ENCODE measurements at regions of chr6 and their contacts with region 1.

Region 1: GRCh38 chr6:159042003-159042825 is 2.6 kb downstream of the TAGAP start:
- DNase-seq: peak; percentile 86
- H3K4me3 Mint-ChIP-seq: peak overlapping the region; percentile 94
- H3K27ac Mint-ChIP-seq: peak overlapping the region; percentile 95
- H3K4me1 Mint-ChIP-seq: peaks cover 69% of the 10 kb centered on the region
- H3K27me3 Mint-ChIP-seq: no peaks in the 10 kb centered on the region

Region 2: DNA sequence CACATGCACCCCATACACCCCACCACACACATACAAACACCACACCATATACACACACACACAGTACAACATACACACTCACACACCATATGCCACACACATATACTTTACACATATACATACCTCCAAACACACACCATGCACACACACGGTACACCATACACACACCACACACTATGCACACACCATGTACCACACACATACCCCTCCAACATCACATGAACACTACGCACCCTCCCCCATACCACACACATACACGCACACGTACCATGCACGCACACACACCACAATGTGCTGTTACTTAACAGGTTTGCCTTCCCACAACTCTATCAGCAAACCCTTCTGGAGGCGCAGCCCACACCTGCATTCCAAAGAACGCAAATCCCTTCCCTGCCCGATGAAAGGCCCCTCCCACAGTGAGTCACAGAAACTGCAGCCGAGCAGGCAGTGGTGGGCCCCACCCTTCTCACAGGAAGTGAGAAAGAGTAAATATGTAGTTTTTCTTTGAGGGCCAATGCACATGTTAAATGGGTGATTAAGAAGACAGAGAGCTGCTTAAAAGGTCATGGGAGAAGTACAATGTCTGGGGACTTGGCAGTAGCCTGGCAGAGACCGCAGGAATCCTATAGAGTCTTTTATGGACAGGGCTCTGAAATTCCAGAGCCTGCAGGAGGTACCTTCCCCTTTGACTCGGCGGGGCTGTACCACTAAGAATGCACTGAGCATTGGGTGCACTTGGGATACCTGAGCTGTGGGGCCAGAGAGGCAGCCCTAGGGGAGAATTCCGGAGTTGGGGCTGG is 188.9 kb before region 1 on chr6:
- CTCF ChIA-PET with region 1: interaction called, 3 read pairs
- POLR2A ChIA-PET with region 1: no interaction called
- intact Hi-C with region 1: loop called (anchors 2 kb)
- DNase-seq: peak; percentile 94
- H3K4me3 Mint-ChIP-seq: no peak overlapping the region
- H3K27ac Mint-ChIP-seq: no peak overlapping the region
- H3K4me1 Mint-ChIP-seq: peaks cover 28% of the 10 kb centered on the region
- H3K27me3 Mint-ChIP-seq: no peaks in the 10 kb centered on the region

Region 3: GRCh38 chr6:158894193-158894592 is 148.0 kb before region 1 on chr6:
- CTCF ChIA-PET with region 1: no interaction called
- POLR2A ChIA-PET with region 1: no interaction called
- intact Hi-C with region 1: no loop called
- DNase-seq: no peak
- H3K4me3 Mint-ChIP-seq: no peak overlapping the region
- H3K27ac Mint-ChIP-seq: no peak overlapping the region
- H3K4me1 Mint-ChIP-seq: no peaks in the 10 kb centered on the region
- H3K27me3 Mint-ChIP-seq: no peaks in the 10 kb centered on the region

Region 4: DNA sequence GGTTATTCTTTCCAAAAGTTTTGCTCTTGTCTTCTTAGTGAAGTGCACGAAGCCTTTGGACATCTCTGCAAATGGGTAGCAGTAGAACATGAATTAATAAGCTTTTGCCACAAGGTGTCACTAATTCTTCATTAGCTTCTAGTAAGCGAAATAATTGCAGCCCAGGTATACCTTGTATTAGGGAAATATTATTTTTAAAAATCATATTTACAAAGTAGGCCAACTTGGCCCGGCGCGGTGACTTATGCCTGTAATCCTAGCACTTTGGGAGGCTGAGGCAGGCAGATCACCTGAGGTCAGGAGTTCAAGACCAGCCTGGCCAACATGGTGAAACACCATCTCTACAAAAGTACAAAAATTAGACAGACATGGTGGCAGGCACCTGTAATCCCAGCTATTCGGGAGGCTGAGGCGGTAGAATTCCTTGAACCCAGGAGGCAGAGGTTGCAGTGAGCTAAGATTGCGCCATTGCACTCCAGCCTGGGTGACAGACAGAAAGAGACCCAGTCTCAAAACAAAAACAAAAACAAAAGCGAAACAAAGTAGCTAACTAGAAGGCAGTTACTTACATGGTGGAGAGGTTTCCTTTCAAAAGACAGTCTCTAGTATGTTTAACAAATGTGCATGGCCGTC is 33.4 kb before region 1 on chr6:
- CTCF ChIA-PET with region 1: interaction called, 83 read pairs
- POLR2A ChIA-PET with region 1: interaction called, 5 read pairs
- intact Hi-C with region 1: loop called (anchors 5 kb)
- DNase-seq: peak; percentile 23
- H3K4me3 Mint-ChIP-seq: peak overlapping the region; percentile 42
- H3K27ac Mint-ChIP-seq: peak overlapping the region; percentile 14
- H3K4me1 Mint-ChIP-seq: peaks cover 35% of the 10 kb centered on the region
- H3K27me3 Mint-ChIP-seq: no peaks in the 10 kb centered on the region

Region 5: DNA sequence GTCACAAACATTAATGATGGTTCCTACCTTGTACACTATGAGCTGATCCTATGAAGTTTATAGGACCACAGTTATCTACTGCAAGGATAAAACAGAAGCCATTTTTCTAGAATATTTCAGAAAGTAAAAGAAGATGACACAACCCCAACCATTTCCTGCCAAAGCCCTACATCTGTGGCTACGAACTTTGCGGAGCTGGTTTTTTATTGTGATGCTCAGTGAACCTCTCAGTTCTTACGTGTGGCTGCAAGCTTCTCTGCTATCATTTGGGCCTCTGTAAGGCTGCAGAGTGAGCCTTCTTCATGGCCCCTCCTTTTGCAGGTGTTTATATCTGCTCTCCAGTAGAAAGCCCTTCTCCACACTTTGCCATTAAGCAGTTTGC is 20.3 kb after region 1 on chr6:
- CTCF ChIA-PET with region 1: interaction called, 93 read pairs
- POLR2A ChIA-PET with region 1: interaction called, 69 read pairs
- intact Hi-C with region 1: loop called (anchors 1 kb)
- DNase-seq: peak; percentile 76
- H3K4me3 Mint-ChIP-seq: peak overlapping the region; percentile 53
- H3K27ac Mint-ChIP-seq: peak overlapping the region; percentile 93
- H3K4me1 Mint-ChIP-seq: peaks cover 99% of the 10 kb centered on the region
- H3K27me3 Mint-ChIP-seq: no peaks in the 10 kb centered on the region

Region 6: DNA sequence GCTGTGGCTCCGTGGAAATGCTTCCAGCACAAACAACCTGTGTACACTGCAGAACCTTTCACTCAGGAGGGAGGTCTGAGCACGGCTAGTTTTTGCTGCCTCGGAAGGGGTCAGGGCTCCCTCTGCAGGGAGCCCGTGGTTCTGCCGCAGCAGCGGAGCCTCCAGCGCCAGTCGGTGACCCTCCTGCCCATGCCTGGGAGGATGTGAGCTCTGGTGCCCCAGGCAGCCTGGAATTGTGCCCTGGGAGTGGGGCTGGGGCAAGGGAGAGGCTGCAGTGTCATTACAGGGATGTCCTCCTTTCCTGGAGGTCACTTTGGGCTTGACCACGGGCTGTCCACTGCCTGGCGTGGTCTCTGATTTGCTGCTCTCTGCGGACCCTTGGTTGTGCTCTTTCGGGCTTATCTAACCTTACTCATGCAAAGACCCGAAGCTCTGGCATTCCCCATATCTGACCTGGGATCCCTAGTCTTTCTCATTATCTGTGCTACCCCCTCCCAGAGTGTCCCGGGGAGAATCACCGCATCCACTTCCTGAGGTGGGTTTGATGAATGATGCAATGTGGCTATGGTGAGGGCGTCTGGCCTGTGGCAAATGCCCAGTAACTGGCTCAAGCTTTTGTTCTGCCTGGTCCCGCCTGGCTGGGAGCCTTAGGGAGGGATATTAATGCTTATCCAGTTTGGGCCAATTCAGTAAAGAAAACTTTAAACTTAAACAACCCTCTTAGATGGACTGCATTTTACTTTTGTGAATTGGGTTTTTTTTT is 62.1 kb after region 1 on chr6:
- CTCF ChIA-PET with region 1: interaction called, 370 read pairs
- POLR2A ChIA-PET with region 1: interaction called, 27 read pairs
- intact Hi-C with region 1: loop called (anchors 1 kb)
- DNase-seq: peak; percentile 88
- H3K4me3 Mint-ChIP-seq: peak overlapping the region; percentile 54
- H3K27ac Mint-ChIP-seq: peak overlapping the region; percentile 40
- H3K4me1 Mint-ChIP-seq: peaks cover 75% of the 10 kb centered on the region
- H3K27me3 Mint-ChIP-seq: no peaks in the 10 kb centered on the region

Region 7: DNA sequence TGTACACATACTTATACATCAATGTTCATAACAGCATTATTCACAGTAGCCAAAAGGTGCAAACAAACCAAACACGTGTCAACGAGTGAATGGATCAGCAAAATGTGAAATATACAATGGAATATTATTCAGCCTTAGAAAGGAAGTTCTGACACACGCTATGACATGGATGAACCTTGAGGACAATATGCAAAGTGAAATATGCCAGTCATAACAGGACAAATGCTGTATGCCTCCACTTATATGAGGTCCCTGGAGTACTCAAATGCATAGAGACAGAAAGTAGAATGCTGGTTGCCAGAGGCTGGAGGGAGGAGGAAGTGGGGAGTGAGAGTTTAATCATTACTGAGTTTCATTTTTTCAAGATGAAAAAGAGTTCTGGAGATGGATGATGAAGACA is 888.9 kb after region 1 on chr6:
- CTCF ChIA-PET with region 1: no interaction called
- POLR2A ChIA-PET with region 1: no interaction called
- intact Hi-C with region 1: loop called (anchors 1 kb)
- DNase-seq: peak; percentile 69
- H3K4me3 Mint-ChIP-seq: no peak overlapping the region
- H3K27ac Mint-ChIP-seq: peak overlapping the region; percentile 92
- H3K4me1 Mint-ChIP-seq: peaks cover 37% of the 10 kb centered on the region
- H3K27me3 Mint-ChIP-seq: peaks cover 2% of the 10 kb centered on the region